ENCODE measurements at regions of chr11 and their contacts with region 1.

Region 1: GRCh38 chr11:10208131-10208575 is 85.9 kb downstream of the SBF2 start:
- DNase-seq: peak; percentile 11
- ATAC-seq: peak; percentile 74
- H3K4me3 Mint-ChIP-seq: no peak overlapping the region
- H3K27ac Mint-ChIP-seq: no peak overlapping the region
- H3K4me1 Mint-ChIP-seq: no peaks in the 10 kb centered on the region
- H3K27me3 Mint-ChIP-seq: peaks cover 3% of the 10 kb centered on the region

Region 2: GRCh38 chr11:10197091-10197490 is 11.1 kb before region 1 on chr11:
- CTCF ChIA-PET with region 1: interaction called, 11 read pairs
- POLR2A ChIA-PET with region 1: no interaction called
- intact Hi-C with region 1: no loop called
- DNase-seq: no peak
- ATAC-seq: no peak
- H3K4me3 Mint-ChIP-seq: no peak overlapping the region
- H3K27ac Mint-ChIP-seq: no peak overlapping the region
- H3K4me1 Mint-ChIP-seq: peaks cover 6% of the 10 kb centered on the region
- H3K27me3 Mint-ChIP-seq: no peaks in the 10 kb centered on the region

Region 3: DNA sequence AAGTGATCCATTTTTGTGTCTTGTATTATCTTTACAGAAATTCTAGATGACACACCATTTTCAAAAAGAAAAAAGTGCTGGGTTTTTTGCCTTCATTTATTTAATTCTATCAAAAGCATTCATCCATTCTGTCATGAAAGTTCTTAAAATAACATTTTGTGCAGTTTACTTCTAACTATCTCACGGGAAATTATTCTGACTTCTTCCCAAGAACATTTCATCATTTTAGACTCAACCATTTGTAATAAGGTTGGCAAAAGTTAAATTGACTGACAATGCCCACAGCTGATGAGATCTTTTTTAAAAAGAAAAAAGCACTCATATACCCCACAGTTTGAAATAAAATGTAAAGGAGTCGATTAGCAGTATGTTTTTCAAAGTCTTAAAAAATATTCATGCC is 17.4 kb after region 1 on chr11:
- CTCF ChIA-PET with region 1: interaction called, 16 read pairs
- POLR2A ChIA-PET with region 1: no interaction called
- intact Hi-C with region 1: no loop called
- DNase-seq: no peak
- ATAC-seq: no peak
- H3K4me3 Mint-ChIP-seq: no peak overlapping the region
- H3K27ac Mint-ChIP-seq: no peak overlapping the region
- H3K4me1 Mint-ChIP-seq: no peaks in the 10 kb centered on the region
- H3K27me3 Mint-ChIP-seq: no peaks in the 10 kb centered on the region

Measured in activated CD4-positive, alpha-beta T cell treated with anti-CD3 and anti-CD28 coated beads for 36 hours (primary cell).